H1 (cell line): ENCODE measurements at regions of chrX and their contacts with region 1.

Region 1: GRCh38 chrX:119729408-119730201 is 28.8 kb upstream of the SOWAHD start:
- DNase-seq: peak; percentile 21 to 60
- H3K4me3 ChIP-seq: no peak overlapping the region
- H3K27ac ChIP-seq: no peak overlapping the region
- H3K4me1 ChIP-seq: peaks cover 0 to 2% (median under 1%) of the 10 kb centered on the region in 4 experiments; a peak in 2 of 7 replicates
- H3K27me3 ChIP-seq: no peaks in the 10 kb centered on the region
- CTCF ChIP-seq: peak; percentile 16 to 57 (median 55)
- EP300 ChIP-seq: no peak
- POLR2A ChIP-seq: no peak
- RAD21 ChIP-seq: peak; percentile 65 to 71

Region 2: DNA sequence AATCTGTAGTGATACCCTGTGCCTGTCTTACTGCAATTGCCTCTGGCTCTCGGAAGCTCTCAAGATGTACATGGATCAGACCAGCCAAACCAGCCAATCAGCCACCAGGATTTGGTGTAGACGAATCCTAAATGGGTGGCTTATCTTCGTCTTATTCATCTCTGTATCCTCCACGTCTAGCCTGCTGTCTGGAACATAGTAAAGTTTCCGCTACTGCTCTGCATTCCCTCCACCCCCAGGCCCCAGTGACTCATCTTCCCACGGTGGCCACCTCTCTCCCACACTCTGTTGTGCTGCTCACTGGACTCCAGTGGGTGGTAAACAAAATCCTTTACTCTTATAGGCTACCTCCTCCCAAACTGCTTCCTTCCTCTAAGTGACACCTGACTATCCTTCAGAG is 74.5 kb before region 1 on chrX:
- CTCF ChIA-PET with region 1: interaction called, 26 read pairs
- POLR2A ChIA-PET with region 1: no interaction called
- DNase-seq: no peak
- H3K4me3 ChIP-seq: no peak overlapping the region
- H3K27ac ChIP-seq: no peak overlapping the region
- H3K4me1 ChIP-seq: no peaks in the 10 kb centered on the region; a peak in 1 of 7 replicates
- H3K27me3 ChIP-seq: no peaks in the 10 kb centered on the region
- CTCF ChIP-seq: no peak
- EP300 ChIP-seq: no peak
- POLR2A ChIP-seq: no peak
- RAD21 ChIP-seq: no peak

Region 3: GRCh38 chrX:119693040-119693995 is 36.3 kb before region 1 on chrX and contains the start of gene SEPTIN6:
- CTCF ChIA-PET with region 1: interaction called, 47 read pairs
- POLR2A ChIA-PET with region 1: interaction called, 4 read pairs
- DNase-seq: peak; percentile 53 to 76
- H3K4me3 ChIP-seq: peak within 1 kb of the TSS; percentile 45 to 81 (median 58)
- H3K27ac ChIP-seq: no peak within 1 kb of the TSS
- H3K4me1 ChIP-seq: peaks cover 8 to 23% (median 15%) of the 10 kb centered on the region in 4 experiments
- H3K27me3 ChIP-seq: peaks cover 0 to 10% (median 8%) of the 10 kb centered on the region in 4 experiments; a peak in 3 of 7 replicates
- CTCF ChIP-seq: no peak
- EP300 ChIP-seq: peak in 1 of 2 experiments; percentile 85; a peak in 1 of 3 replicates
- POLR2A ChIP-seq: peak in 1 of 2 experiments; percentile 32; a peak in 1 of 3 replicates
- RAD21 ChIP-seq: no peak
- total RNA-seq, gene SEPTIN6: 27.9 and 31.0 TPM in 2 replicates

Region 4: DNA sequence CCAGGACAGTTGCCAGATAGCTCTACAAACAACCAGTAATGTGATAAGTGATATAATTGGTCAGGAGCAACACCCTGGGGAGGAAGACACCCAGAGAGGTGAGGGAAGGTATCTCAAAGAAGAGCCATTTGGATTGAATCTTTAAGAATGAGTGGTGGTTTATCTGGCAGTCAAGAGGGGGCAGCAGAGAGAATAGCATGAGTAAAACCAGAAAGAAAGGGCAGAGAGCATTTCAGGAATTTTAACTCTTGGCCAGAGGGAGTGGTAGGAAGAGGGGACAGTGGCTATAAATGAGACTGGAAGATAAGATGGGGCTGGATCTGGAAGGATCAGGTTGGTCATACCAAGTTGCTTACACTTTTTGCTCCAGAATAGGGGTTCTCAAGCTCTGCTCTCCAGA is 30.8 kb before region 1 on chrX:
- CTCF ChIA-PET with region 1: interaction called, 47 read pairs
- POLR2A ChIA-PET with region 1: interaction called, 4 read pairs
- DNase-seq: no peak
- H3K4me3 ChIP-seq: no peak overlapping the region
- H3K27ac ChIP-seq: no peak overlapping the region
- H3K4me1 ChIP-seq: peaks cover 6 to 18% (median 9%) of the 10 kb centered on the region in 4 experiments
- H3K27me3 ChIP-seq: peaks cover 0 to 10% (median 7%) of the 10 kb centered on the region in 4 experiments; a peak in 3 of 7 replicates
- CTCF ChIP-seq: peak in 2 of 3 experiments; percentile 49 to 58; a peak in 3 of 4 replicates
- EP300 ChIP-seq: no peak
- POLR2A ChIP-seq: no peak
- RAD21 ChIP-seq: peak; percentile 42 to 51

Region 5: GRCh38 chrX:119709630-119710029 is 20.0 kb before region 1 on chrX:
- CTCF ChIA-PET with region 1: interaction called, 17 read pairs
- POLR2A ChIA-PET with region 1: interaction called, 3 read pairs
- DNase-seq: no peak
- H3K4me3 ChIP-seq: no peak overlapping the region
- H3K27ac ChIP-seq: no peak overlapping the region
- H3K4me1 ChIP-seq: no peaks in the 10 kb centered on the region
- H3K27me3 ChIP-seq: no peaks in the 10 kb centered on the region
- CTCF ChIP-seq: no peak
- EP300 ChIP-seq: no peak
- POLR2A ChIP-seq: no peak
- RAD21 ChIP-seq: no peak

Region 6: DNA sequence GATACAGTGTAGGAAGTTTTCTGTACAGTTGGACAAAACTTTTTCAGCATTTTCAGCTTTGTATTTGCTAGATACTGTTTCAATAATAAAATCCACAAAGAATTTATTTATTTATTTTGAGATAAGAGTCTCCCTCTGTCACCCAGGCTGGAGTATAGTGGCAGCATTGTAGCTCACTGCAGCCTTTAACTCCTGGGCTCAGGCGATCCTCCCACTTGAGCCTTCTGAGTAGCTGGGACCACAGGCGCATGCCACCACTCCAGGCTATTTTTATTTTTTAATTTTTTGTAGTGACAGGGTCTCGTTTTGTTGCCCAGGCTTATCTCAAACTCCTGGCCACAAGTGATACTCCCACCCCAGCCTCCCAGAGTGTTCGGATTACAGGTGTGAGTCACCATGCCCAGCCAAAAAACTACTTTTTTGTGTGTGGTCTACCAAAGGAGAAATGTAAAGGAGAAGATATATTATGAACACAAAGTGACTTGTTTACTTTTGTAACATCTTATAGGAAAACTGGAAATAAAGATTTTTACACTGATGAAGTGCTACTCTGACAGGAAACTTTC is 15.8 kb after region 1 on chrX:
- CTCF ChIA-PET with region 1: interaction called, 18 read pairs
- POLR2A ChIA-PET with region 1: interaction called, 4 read pairs
- DNase-seq: no peak
- H3K4me3 ChIP-seq: no peak overlapping the region
- H3K27ac ChIP-seq: no peak overlapping the region
- H3K4me1 ChIP-seq: no peaks in the 10 kb centered on the region
- H3K27me3 ChIP-seq: no peaks in the 10 kb centered on the region
- CTCF ChIP-seq: no peak
- EP300 ChIP-seq: no peak
- POLR2A ChIP-seq: no peak
- RAD21 ChIP-seq: no peak

Region 7: DNA sequence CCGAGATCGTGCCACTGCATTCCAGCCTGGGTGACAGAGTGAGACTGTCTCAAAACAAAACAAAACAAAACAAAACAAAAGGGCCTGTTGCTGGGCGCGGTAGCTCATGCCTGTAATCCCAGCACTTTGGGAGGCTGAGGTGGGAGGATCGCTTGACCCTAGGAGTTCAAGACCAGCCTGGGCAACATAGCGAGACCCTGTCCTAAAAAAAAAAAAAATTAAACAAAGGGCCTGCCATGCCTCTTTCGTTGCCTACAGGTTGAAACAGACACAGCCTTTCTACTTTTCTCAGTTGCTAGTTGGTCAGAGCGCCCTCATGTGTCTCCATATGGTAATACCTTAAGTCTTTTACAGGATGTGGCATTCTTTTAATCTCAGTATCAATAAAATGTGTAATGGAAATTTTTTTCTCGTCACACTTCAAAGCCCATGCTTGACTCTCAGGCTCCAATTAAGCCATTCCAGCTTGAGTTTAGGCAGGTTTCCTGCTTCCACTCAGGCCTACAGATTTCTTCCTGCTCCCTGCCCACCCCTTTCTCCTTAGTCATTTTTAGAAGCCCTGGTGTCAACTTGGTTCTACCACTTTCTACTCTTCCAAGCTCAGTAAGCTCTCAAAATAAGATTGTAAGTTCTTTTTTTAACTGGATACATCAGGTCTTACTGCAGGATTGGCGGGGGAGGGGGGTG is 24.1 kb after region 1 on chrX:
- CTCF ChIA-PET with region 1: interaction called, 33 read pairs
- POLR2A ChIA-PET with region 1: interaction called, 4 read pairs
- DNase-seq: no peak
- H3K4me3 ChIP-seq: no peak overlapping the region
- H3K27ac ChIP-seq: no peak overlapping the region
- H3K4me1 ChIP-seq: peaks cover 4 to 16% (median 12%) of the 10 kb centered on the region in 4 experiments; a peak in 5 of 7 replicates
- H3K27me3 ChIP-seq: no peaks in the 10 kb centered on the region
- CTCF ChIP-seq: peak in 2 of 3 experiments; percentile 54 to 55; a peak in 3 of 4 replicates
- EP300 ChIP-seq: no peak
- POLR2A ChIP-seq: no peak
- RAD21 ChIP-seq: peak; percentile 39 to 60

Region 8: DNA sequence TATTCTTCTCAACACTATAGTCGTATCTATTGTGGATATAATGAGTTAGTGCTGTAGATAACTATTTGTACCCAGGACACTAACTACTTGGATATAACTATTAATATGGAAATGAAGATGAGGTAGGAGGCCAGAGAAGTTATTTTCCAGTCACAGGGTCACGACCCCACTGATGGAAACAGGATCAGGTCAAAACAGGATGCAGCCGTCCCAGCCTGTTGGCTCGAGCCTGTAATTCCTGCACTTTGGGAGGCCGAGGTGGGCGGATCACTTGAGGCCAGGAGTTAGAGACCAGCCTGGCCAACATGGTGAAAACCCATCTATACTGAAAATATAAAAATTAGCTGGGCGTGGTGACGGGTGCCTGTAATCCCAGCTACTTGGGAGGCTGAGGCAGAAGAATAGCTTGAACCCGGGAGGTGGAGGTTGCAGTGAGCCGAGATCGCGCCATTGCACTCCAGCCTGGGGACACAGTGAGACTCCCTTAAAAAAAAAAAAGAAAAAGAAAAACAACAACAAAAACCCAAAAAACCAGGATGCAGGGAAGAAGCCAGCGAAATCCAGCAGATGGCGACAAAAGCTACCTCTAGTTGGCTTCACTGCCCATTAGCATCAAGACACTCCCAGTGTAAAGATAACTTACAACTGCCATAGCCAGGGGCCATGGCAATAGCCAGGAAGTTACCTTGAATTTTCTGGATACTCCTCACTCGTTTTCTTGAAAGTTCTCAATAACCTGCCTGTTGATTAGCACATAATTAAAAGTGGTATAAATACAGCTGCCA is 251.9 kb after region 1 on chrX:
- CTCF ChIA-PET with region 1: no interaction called
- POLR2A ChIA-PET with region 1: no interaction called
- DNase-seq: peak in 1 of 2 experiments; percentile 49
- H3K4me3 ChIP-seq: no peak overlapping the region
- H3K27ac ChIP-seq: no peak overlapping the region
- H3K4me1 ChIP-seq: peaks cover 0 to 4% (median 0%) of the 10 kb centered on the region in 4 experiments; a peak in 1 of 7 replicates
- H3K27me3 ChIP-seq: peaks cover 0 to 2% (median 0%) of the 10 kb centered on the region in 4 experiments; a peak in 3 of 7 replicates
- CTCF ChIP-seq: peak; percentile 25 to 58 (median 50); a peak in 3 of 4 replicates
- EP300 ChIP-seq: no peak
- POLR2A ChIP-seq: no peak
- RAD21 ChIP-seq: peak; percentile 65 to 66